Naive thymus-derived CD4-positive, alpha-beta T cell (primary cell): ENCODE measurements at regions of chr16 and their contacts with region 1.

Region 1: GRCh38 chr16:89641458-89642119 is 15.9 kb downstream of the CHMP1A start:
- DNase-seq: no peak
- ATAC-seq: no peak
- H3K4me3 ChIP-seq: no peak overlapping the region
- H3K4me3 Mint-ChIP-seq: peak overlapping the region in 8 of 10 donors; percentile 48 to 85 (median 74)
- H3K27ac ChIP-seq: no peak overlapping the region
- H3K27ac Mint-ChIP-seq: peak overlapping the region in 1 of 9 donors; percentile 78
- H3K4me1 ChIP-seq: no peaks in the 10 kb centered on the region
- H3K4me1 Mint-ChIP-seq: peaks cover 0 to 10% (median 7%) of the 10 kb centered on the region in 7 donors
- H3K27me3 ChIP-seq: no peaks in the 10 kb centered on the region
- H3K27me3 Mint-ChIP-seq: no peaks in the 10 kb centered on the region

Region 2: DNA sequence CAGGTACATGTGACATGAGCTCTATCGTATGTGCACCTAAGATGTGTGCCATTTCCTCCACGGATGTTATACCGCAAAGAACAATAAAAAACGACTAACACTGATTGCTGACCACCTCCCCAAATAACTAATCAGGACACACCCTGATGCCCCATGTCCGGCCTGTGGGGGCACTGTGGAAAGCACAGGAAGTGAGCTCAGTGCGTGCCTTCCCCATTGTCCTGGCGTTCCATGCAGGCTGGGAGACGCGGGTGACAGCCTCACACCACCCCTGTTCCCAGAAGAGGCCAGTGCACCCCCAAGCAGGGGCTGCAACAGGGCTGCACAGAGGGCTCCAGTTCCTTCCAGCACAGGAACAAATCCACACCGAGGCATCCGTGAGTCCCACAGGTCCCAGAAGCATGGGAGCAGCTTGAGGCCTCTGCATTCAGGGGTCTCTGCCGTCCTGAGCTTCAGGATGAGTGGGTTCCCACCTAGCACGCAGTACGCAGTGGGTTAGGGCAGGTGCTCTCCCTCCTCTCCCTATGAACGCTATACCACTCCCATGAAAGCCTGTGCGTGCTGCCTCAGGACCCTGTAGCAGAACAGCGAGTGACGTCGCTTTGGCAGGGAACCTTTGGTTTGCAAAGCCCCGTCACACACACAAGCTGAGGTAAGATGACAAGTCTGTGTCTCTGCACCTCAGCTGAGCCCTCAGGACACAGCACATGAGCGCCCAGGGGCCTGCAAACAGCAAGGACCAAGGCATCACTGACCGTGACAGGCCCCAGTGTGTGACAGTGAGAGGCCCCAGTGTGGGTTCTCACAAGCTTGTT is 306.4 kb before region 1 on chr16:
- CTCF ChIA-PET with region 1: no interaction called
- POLR2A ChIA-PET with region 1: no interaction called
- intact Hi-C with region 1: loop called in 1 of 2 experiments (anchors 1 kb)
- DNase-seq: no peak
- ATAC-seq: no peak
- H3K4me3 ChIP-seq: no peak overlapping the region
- H3K4me3 Mint-ChIP-seq: peak overlapping the region in 7 of 10 donors; percentile 28 to 75 (median 57)
- H3K27ac ChIP-seq: peak overlapping the region; percentile 32
- H3K27ac Mint-ChIP-seq: peak overlapping the region in 8 of 9 donors; percentile 13 to 90 (median 68)
- H3K4me1 ChIP-seq: peaks cover 42 to 64% of the 10 kb centered on the region in 2 donors
- H3K4me1 Mint-ChIP-seq: peaks cover 57 to 87% (median 74%) of the 10 kb centered on the region in 7 donors
- H3K27me3 ChIP-seq: no peaks in the 10 kb centered on the region
- H3K27me3 Mint-ChIP-seq: no peaks in the 10 kb centered on the region

Region 3: DNA sequence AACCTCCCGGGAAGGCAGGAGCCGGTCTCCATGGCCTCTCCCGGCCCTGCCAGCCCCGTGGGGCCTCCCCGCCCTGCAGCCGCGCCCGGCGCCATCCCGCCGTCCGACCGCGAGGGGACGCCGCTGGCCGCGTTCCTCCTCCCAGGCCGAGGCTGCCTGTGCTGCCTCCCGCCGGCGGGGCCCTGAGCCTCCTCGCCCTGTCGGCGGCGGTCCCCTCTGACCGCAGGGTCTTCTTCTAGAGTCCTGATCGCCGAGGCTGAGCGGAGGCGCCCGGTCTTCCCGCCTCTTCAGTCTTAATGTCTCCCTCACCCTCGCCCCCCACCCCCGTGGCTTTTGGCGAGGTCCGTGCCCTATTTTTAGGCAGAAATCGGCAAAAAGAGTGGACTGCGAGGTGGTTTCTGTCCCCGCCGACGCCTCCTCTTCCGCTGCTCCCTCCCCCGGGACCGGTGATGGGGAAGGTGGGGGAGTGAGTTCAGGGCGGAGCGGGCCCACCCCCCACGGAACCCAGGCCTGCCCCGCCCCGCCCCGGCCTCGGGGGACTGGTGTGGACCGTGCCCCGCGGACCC is 66.8 kb before region 1 on chr16:
- CTCF ChIA-PET with region 1: no interaction called
- POLR2A ChIA-PET with region 1: no interaction called
- intact Hi-C with region 1: loop called in 1 of 2 experiments (anchors 1 kb)
- DNase-seq: peak in 4 of 9 donors; percentile 20 to 79 (median 42)
- ATAC-seq: peak; percentile 67
- H3K4me3 ChIP-seq: peak overlapping the region; percentile 24
- H3K4me3 Mint-ChIP-seq: peak overlapping the region in 9 of 10 donors; percentile 34 to 79 (median 64)
- H3K27ac ChIP-seq: no peak overlapping the region
- H3K27ac Mint-ChIP-seq: no peak overlapping the region
- H3K4me1 ChIP-seq: peaks cover 0 to 17% of the 10 kb centered on the region in 2 donors
- H3K4me1 Mint-ChIP-seq: peaks cover 8 to 29% (median 15%) of the 10 kb centered on the region in 7 donors
- H3K27me3 ChIP-seq: no peaks in the 10 kb centered on the region
- H3K27me3 Mint-ChIP-seq: peaks cover 3 to 33% (median 12%) of the 10 kb centered on the region in 5 donors